AG04450 (cell line): ENCODE measurements at regions of chr1 and their contacts with region 1.

Region 1: GRCh38 chr1:66242646-66243547 is 291.1 kb upstream of the SGIP1 start:
- DNase-seq: peak; percentile 71
- H3K4me3 ChIP-seq: no peak overlapping the region
- H3K27ac ChIP-seq: no peak overlapping the region
- H3K27me3 ChIP-seq: no peaks in the 10 kb centered on the region
- CTCF ChIP-seq: peak; percentile 100

Region 2: DNA sequence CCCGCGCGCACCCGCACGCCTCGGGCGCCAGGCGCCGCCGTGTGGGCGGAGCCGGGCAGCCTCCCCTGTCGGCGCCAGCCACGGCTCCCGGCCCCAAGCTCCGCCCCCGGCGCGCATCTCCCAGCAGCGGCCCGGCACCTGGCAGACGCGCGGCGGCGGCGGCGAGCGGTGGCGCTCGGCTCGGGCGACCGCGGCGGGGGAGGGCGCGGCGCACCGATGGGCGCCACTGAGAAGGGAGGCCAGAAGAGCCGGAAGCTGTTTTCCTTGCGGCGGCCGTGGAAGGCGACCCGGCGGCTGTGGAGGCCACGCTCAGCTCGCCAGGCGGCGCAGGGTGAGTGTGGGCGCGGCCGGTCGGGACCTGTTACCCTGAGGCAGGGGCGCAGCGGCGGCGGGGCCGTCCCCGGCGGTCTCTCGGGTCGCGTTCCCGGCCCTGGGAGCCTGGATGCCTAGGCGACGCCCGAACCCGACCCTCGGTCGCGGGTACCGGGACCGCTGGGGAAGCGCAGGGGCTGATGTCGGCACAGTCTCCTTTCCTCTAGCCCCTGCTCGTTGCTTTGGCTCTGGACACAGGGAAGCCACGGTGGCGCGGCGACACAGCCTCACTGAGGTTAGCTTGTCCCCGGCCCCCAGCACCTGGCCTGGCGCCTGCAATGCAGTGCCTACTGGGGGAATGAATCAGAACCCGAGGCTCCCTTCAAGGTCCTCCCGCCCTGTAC is 988.4 kb before region 1 on chr1:
- CTCF ChIA-PET with region 1: interaction called, 13 read pairs
- POLR2A ChIA-PET with region 1: no interaction called
- DNase-seq: no peak
- H3K4me3 ChIP-seq: peak overlapping the region; percentile 55
- H3K27ac ChIP-seq: no peak overlapping the region
- H3K27me3 ChIP-seq: peaks cover 18% of the 10 kb centered on the region
- CTCF ChIP-seq: peak; percentile 27; the same call in 1 of the 2 replicates

Region 3: GRCh38 chr1:65952696-65953095 is 290.2 kb before region 1 on chr1:
- CTCF ChIA-PET with region 1: interaction called, 133 read pairs
- POLR2A ChIA-PET with region 1: no interaction called
- DNase-seq: no peak
- H3K4me3 ChIP-seq: no peak overlapping the region
- H3K27ac ChIP-seq: no peak overlapping the region
- H3K27me3 ChIP-seq: no peaks in the 10 kb centered on the region
- CTCF ChIP-seq: no peak

Region 4: DNA sequence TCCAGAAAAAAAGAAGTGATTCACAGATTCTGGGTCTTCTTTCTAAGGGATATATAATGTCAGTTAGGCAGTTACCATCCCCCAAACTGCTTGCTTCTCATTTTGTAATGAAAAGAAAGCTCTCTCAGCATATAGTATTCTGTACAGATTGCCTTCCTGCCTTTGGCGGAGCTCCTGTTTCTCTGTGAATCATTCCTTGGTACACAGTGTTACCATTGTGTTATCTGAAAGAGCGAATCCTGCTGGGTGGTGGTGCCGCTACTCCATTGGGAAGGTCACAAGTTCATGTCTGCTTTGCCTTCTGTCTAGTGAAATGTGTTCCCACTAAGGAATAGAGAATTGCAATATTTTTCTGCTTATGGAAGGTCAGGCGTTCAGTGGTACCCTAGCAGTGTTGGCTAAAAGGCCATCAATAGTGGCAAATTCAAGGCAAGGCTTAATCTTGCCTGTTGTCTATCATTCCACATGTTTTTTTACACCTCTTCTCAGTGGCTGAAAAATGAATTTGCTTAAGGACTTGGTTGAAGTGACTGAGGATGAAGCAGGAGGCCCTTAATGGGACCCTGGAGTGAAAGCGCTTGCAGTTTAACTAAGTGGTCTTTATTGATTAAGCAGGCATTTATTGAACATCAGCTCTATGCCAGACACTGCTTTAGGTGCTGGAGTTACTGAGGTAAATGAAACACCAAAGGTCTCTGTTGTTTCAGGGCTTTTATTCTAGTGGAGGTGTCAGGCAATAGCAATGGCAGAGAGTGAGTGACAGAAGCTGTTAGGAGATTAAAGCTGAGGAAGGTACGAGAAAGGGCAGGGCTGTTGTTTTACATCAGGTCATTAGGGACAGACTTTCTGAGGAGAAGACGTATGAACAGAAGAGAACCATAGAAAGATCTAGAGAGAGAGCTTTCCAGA is 263.5 kb before region 1 on chr1:
- CTCF ChIA-PET with region 1: interaction called, 15 read pairs
- POLR2A ChIA-PET with region 1: no interaction called
- DNase-seq: no peak
- H3K4me3 ChIP-seq: no peak overlapping the region
- H3K27ac ChIP-seq: no peak overlapping the region
- H3K27me3 ChIP-seq: no peaks in the 10 kb centered on the region
- CTCF ChIP-seq: no peak

Region 5: GRCh38 chr1:66012106-66012784 is 230.7 kb before region 1 on chr1:
- CTCF ChIA-PET with region 1: no interaction called
- POLR2A ChIA-PET with region 1: no interaction called
- DNase-seq: peak; percentile 16
- H3K4me3 ChIP-seq: no peak overlapping the region
- H3K27ac ChIP-seq: no peak overlapping the region
- H3K27me3 ChIP-seq: no peaks in the 10 kb centered on the region
- CTCF ChIP-seq: no peak

Region 6: DNA sequence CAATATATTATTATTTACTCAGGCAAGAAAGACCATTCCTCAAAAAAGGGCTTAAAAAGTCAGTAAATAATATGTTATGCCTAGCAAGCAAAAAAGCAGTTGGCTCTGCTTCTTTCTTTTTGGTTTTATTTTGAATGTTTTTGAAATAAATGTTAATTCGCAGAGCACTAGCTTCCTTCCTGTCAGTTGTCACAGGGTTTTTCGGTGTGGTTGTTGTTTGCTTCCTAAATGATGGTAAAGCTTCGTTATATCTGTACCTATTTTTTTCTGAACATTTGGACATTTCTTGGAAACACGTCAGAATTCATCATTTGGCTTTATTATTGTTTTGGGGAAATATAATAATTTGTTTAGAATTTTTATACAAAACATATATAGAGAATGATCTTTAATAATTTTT is 60.9 kb before region 1 on chr1:
- CTCF ChIA-PET with region 1: interaction called, 12 read pairs
- POLR2A ChIA-PET with region 1: no interaction called
- DNase-seq: no peak
- H3K4me3 ChIP-seq: no peak overlapping the region
- H3K27ac ChIP-seq: no peak overlapping the region
- H3K27me3 ChIP-seq: no peaks in the 10 kb centered on the region
- CTCF ChIP-seq: no peak

Region 7: GRCh38 chr1:66231217-66231616 is 11.7 kb before region 1 on chr1:
- CTCF ChIA-PET with region 1: interaction called, 20 read pairs
- POLR2A ChIA-PET with region 1: no interaction called
- DNase-seq: no peak
- H3K4me3 ChIP-seq: no peak overlapping the region
- H3K27ac ChIP-seq: no peak overlapping the region
- H3K27me3 ChIP-seq: no peaks in the 10 kb centered on the region
- CTCF ChIP-seq: no peak

Region 8: DNA sequence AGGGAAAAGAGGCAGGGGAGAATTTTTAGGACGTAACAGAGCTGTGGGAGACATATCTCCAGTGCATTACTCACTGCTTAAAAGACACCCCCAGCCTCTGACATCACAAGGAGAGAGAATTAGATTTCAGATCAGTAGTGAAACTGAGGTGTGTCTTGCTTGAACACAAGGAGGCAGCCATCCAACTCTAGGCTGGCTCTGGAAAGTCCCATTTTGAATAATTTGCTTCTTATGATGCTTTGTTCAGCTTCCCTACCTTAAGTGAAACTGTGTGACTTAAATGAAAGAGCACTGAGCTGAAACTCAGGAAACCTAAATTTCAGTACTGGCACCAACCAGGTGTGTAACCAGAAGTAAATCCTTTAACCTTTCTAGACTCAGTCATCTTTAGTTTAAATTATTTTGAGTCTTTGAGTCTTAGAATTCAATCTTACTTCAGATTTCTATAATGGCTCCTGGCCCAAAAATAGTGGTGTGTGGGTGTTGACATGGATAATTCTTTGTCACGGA is 39.5 kb after region 1 on chr1:
- CTCF ChIA-PET with region 1: no interaction called
- POLR2A ChIA-PET with region 1: no interaction called
- DNase-seq: peak; percentile 42
- H3K4me3 ChIP-seq: no peak overlapping the region
- H3K27ac ChIP-seq: peak overlapping the region; percentile 12
- H3K27me3 ChIP-seq: no peaks in the 10 kb centered on the region
- CTCF ChIP-seq: peak; percentile 20; the same call in 1 of the 2 replicates

Region 9: DNA sequence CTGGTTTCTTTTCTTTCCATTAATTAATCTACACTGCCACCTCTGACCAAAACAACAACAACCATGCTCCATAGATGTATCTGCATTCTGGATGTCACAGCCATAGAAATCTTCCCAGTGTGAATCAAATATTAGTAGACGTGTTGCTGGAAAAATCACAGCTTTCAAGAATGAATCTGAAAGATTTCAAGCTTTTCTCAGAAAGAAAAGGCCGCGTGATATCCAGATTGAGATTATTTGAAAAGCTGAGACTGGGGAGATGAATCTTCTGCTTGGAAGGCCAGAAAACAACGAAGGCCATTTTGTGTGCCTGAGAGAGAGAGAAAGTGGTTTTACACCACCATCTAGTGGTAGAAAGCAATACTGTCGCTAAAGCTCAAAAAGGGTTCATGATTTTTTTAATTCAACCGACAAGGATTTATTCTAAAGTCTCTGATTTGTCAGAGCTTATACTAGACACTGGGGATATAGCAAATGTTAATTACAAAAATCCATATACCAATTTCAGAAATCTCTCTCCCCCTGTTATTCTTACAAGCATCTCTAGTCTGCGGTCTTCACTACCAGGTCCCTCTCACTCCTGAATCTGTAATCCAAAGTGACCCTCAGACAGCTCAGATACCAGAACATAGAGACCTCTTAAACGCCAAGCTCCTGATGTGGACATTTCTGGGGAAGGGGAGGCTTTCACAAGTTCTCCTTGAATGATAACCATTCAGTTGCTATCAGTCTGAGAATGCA is 203.5 kb after region 1 on chr1:
- CTCF ChIA-PET with region 1: interaction called, 484 read pairs
- POLR2A ChIA-PET with region 1: no interaction called
- DNase-seq: no peak
- H3K4me3 ChIP-seq: no peak overlapping the region
- H3K27ac ChIP-seq: no peak overlapping the region
- H3K27me3 ChIP-seq: no peaks in the 10 kb centered on the region
- CTCF ChIP-seq: peak; percentile 85